ENCODE measurements at regions of chr1 and their contacts with region 1.

Region 1: DNA sequence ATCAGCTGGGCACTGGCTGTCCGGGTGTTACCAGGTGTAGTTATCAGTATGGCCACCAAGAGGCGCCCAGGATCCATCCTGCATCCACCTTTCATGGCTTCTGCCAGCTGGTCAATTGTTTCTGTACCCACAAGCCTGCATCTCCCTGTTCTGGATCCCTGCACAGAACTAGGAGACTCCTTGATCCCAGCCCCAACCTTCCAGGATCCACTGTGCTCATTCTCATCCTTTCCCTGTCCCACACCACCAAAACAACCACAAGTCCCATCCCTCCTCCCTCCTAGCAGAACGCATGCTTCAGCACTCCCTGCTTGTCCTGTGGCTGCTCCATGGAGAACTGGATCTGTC is 27.2 kb upstream of the FOXE3 start:
- DNase-seq: peak; percentile 76
- ATAC-seq: peak; percentile 82
- H3K4me3 Mint-ChIP-seq: no peak overlapping the region
- H3K27ac Mint-ChIP-seq: no peak overlapping the region
- H3K4me1 Mint-ChIP-seq: no peaks in the 10 kb centered on the region
- H3K27me3 Mint-ChIP-seq: peaks cover 3% of the 10 kb centered on the region

Region 2: DNA sequence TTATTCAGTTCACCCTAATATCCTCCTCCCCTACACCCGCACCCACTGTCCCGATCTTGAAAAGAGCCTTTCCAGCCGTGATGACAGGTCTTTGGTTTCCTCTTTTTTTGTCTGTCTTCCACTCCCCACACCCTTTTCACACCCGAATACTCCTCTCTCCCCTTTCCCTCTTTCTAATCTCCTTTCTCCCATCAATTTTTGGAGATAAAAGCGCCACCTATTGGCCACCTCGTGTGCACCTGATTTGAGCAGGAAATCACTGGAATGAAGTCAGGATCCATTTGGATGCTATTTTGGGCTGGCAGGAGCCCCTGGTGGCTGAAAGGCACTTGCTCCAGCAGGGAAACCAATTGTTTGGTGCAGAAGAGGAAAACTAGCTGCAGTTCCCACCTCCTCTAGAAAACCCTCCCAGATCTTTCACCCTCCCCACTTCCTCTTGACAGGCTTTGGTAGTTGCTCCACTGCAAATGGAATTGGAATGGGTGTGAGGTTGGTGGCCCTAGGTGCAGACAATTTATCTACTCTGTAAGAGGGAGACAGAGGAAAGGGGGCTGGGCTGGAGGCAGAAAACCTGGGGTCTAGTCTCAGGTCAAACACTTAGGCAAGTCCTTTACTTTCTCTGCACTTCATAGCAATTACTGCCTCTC is 35.6 kb after region 1 on chr1:
- CTCF ChIA-PET with region 1: interaction called, 4 read pairs
- POLR2A ChIA-PET with region 1: interaction called, 3 read pairs
- intact Hi-C with region 1: loop called in 1 of 2 experiments (anchors 2 kb)
- DNase-seq: peak; percentile 30
- ATAC-seq: no peak
- H3K4me3 Mint-ChIP-seq: no peak overlapping the region
- H3K27ac Mint-ChIP-seq: no peak overlapping the region
- H3K4me1 Mint-ChIP-seq: no peaks in the 10 kb centered on the region
- H3K27me3 Mint-ChIP-seq: peaks cover 14% of the 10 kb centered on the region

Region 3: GRCh38 chr1:47755101-47755990 is 366.5 kb after region 1 on chr1:
- CTCF ChIA-PET with region 1: no interaction called
- POLR2A ChIA-PET with region 1: no interaction called
- intact Hi-C with region 1: loop called in 1 of 2 experiments (anchors 1 kb)
- DNase-seq: peak; percentile 78
- ATAC-seq: peak; percentile 66
- H3K4me3 Mint-ChIP-seq: no peak overlapping the region
- H3K27ac Mint-ChIP-seq: no peak overlapping the region
- H3K4me1 Mint-ChIP-seq: no peaks in the 10 kb centered on the region
- H3K27me3 Mint-ChIP-seq: peaks cover 13% of the 10 kb centered on the region